ENCODE measurements at regions of chr18 and their contacts with region 1.

Region 1: GRCh38 chr18:32760391-32760790 is 12.4 kb downstream of the KLHL14 start:
- DNase-seq: peak; percentile 57
- ATAC-seq: peak; percentile 97
- H3K4me3 Mint-ChIP-seq: peak overlapping the region; percentile 60
- H3K27ac Mint-ChIP-seq: peak overlapping the region; percentile 83
- H3K4me1 Mint-ChIP-seq: peaks cover 93% of the 10 kb centered on the region
- H3K27me3 Mint-ChIP-seq: no peaks in the 10 kb centered on the region
- CTCF ChIP-seq: no peak

Region 2: GRCh38 chr18:32730620-32731091 is 29.7 kb before region 1 on chr18:
- CTCF ChIA-PET with region 1: interaction called, 4 read pairs
- POLR2A ChIA-PET with region 1: interaction called, 4 read pairs
- intact Hi-C with region 1: loop called (anchors 1 kb)
- DNase-seq: no peak
- ATAC-seq: peak; percentile 88
- H3K4me3 Mint-ChIP-seq: peak overlapping the region; percentile 72
- H3K27ac Mint-ChIP-seq: peak overlapping the region; percentile 86
- H3K4me1 Mint-ChIP-seq: peaks cover 50% of the 10 kb centered on the region
- H3K27me3 Mint-ChIP-seq: no peaks in the 10 kb centered on the region
- CTCF ChIP-seq: no peak